A549 (cell line): ENCODE measurements at regions of chr1 and their contacts with region 1.

Region 1: DNA sequence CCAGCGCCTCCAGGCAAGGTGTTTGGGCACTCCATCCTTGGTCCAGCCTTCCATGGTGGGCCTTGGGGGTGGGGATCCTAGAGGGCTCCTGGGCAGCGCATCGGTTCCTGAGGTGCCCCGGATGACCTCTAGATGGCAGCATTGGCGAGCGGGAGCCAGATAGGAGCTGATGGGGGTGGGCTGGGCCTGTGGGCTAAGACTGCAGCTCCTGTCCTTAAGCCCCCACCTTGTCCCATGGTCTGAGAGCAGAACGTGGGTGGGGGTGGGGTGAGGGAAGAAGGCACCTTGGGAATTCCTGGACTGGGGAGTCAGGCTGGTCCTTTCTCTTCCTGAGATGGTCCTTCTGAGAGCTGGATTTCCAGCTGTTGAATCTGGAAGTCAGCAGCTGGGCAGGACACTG is 93.4 kb upstream of the CSF3R start:
- DNase-seq: peak; percentile 29 to 85
- ATAC-seq: peak; percentile 89 to 97
- H3K4me3 ChIP-seq: no peak overlapping the region
- H3K27ac ChIP-seq: no peak overlapping the region
- H3K4me1 ChIP-seq: no peaks in the 10 kb centered on the region
- CTCF ChIP-seq: peak; percentile 69
- EP300 ChIP-seq: no peak
- POLR2A ChIP-seq: no peak
- RAD21 ChIP-seq: peak; percentile 76 to 84

Region 2: GRCh38 chr1:36482710-36483393 is 93.3 kb before region 1 on chr1 and contains the start of gene CSF3R:
- CTCF ChIA-PET with region 1: no interaction called
- POLR2A ChIA-PET with region 1: no interaction called
- DNase-seq: no peak
- ATAC-seq: no peak
- H3K4me3 ChIP-seq: no peak within 1 kb of the TSS
- H3K27ac ChIP-seq: peak within 1 kb of the TSS in 1 of 2 experiments; percentile 49; a peak in 2 of 6 replicates
- H3K4me1 ChIP-seq: peaks cover 20% of the 10 kb centered on the region
- CTCF ChIP-seq: no peak
- EP300 ChIP-seq: no peak
- POLR2A ChIP-seq: no peak
- RAD21 ChIP-seq: no peak
- polyA plus RNA-seq, gene CSF3R: not detected in 2 replicates

Region 3: DNA sequence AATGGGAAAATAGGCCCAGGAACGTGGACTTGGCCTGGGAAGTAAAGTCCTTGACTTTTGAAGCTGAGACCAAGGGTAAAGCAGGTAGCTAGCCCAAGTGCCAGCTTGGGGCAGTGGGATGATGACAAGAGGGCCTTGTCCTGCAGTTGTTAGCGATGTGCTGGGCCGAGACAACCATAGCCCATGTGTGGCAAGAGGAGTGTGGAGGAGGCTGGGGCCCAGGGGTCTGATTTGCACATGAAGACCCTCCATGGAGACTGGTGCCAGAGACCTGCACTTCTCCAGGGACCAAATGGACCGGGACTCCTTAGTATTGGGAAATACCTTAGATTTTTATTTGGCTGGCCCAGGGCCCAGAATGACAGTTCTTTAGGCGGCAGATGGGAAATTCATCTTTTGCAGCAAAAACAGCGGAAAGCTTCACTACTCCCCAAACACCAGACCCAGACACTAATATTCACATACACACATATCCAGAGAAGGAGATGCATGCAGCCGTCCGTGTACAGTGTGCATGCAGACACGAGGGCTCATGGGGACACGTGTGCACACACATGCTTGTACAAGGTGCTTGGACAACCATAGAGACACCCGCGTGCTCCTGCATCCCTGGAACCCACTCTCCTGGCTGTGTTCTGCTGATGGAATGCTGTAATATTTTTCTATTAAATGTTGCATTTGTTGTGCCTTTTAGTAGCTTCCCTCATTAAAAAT is 15.3 kb before region 1 on chr1:
- CTCF ChIA-PET with region 1: interaction called, 26 read pairs
- POLR2A ChIA-PET with region 1: no interaction called
- DNase-seq: no peak
- ATAC-seq: no peak
- H3K4me3 ChIP-seq: no peak overlapping the region
- H3K27ac ChIP-seq: no peak overlapping the region
- H3K4me1 ChIP-seq: no peaks in the 10 kb centered on the region
- CTCF ChIP-seq: no peak
- EP300 ChIP-seq: no peak
- POLR2A ChIP-seq: no peak
- RAD21 ChIP-seq: no peak

Region 4: DNA sequence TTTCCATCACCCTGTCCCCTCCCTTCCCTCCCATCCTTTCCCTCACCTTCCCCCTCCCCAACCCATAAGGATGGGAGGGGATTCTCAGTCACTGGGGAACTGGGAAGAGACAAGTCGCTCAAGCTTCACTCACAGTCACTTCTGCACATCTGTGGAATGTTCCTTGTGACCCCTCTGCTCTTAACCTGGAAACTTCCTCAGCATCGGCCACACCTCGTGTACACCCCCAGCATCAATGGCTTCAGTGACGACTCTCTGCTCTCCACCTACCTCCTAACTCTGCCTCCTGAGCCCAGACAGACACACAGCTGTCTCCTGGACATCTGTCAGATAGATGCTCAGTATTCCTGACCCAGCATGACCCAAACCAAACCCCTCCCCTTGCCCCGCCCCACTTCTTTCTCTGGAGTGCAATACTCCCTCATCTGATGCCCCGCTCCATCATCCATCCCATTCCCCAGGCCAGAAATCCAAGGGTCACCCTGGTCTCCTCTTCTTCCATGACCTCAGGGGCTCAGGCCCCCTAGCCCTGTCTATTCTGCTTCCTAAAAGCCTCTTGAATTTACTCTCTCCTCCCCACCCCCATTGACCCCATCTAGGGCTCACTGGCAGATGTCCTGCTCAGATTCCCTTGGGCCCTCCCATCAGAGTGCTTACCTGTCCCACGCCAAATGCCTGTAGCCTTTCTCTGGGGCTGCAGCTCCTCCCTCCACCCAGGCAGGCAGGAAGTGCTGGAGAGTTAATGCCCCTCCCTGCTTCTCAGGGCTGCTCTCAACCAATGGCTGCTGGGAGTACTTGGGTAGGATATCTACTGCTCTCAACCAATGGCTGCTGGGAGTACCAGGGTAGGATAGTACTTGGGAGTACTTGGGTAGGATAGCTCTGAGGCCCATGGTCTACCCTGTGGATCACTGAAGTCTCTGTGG is 10.3 kb before region 1 on chr1:
- CTCF ChIA-PET with region 1: interaction called, 26 read pairs
- POLR2A ChIA-PET with region 1: no interaction called
- DNase-seq: no peak
- ATAC-seq: no peak
- H3K4me3 ChIP-seq: no peak overlapping the region
- H3K27ac ChIP-seq: no peak overlapping the region
- H3K4me1 ChIP-seq: no peaks in the 10 kb centered on the region
- CTCF ChIP-seq: no peak
- EP300 ChIP-seq: no peak
- POLR2A ChIP-seq: no peak
- RAD21 ChIP-seq: no peak

Region 5: GRCh38 chr1:36650200-36651065 is 74.3 kb after region 1 on chr1:
- CTCF ChIA-PET with region 1: interaction called, 11 read pairs
- POLR2A ChIA-PET with region 1: no interaction called
- DNase-seq: peak; percentile 46 to 55
- ATAC-seq: peak; percentile 62 to 92
- H3K4me3 ChIP-seq: no peak overlapping the region
- H3K27ac ChIP-seq: no peak overlapping the region
- H3K4me1 ChIP-seq: no peaks in the 10 kb centered on the region
- CTCF ChIP-seq: peak; percentile 58
- EP300 ChIP-seq: no peak
- POLR2A ChIP-seq: no peak
- RAD21 ChIP-seq: peak in 1 of 2 experiments; percentile 47; a peak in 4 of 5 replicates

Region 6: GRCh38 chr1:37038227-37039076 is 462.3 kb after region 1 on chr1:
- CTCF ChIA-PET with region 1: interaction called, 10 read pairs
- POLR2A ChIA-PET with region 1: no interaction called
- DNase-seq: peak; percentile 7 to 48
- ATAC-seq: peak; percentile 68 to 86
- H3K4me3 ChIP-seq: no peak overlapping the region
- H3K27ac ChIP-seq: no peak overlapping the region
- H3K4me1 ChIP-seq: no peaks in the 10 kb centered on the region
- CTCF ChIP-seq: no peak
- EP300 ChIP-seq: no peak
- POLR2A ChIP-seq: no peak
- RAD21 ChIP-seq: peak; percentile 44 to 63; a peak in 4 of 5 replicates

Region 7: DNA sequence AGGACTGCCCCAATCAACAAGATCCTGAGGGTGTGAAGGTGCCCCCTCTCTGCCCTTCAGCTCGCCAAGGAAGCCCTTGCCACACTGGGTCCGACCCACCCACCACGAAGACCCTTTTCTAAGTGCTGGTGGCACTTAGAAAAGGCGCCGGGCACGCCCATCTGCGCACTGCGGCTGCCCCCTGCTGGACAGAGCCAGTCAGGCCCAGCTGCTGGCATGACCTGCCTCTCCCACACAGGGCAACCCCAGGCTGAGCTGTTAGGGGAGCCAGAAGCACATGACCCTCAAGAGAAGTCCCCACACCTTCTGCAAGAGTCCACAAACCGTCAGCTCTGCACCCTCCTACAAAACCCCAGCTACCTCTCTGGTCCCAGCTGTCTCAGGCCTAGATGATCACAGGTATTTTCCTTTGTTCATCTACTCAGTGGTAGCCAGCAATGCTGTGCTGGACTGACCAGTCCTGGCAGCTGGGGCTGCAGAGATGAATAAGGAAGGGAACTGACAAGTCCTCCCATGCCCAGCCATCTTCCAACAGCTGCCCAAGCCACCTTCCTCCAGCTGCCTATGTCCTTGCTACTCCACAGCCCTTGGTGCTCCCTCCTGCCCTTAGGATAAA is 858.3 kb after region 1 on chr1:
- CTCF ChIA-PET with region 1: interaction called, 60 read pairs
- POLR2A ChIA-PET with region 1: no interaction called
- DNase-seq: peak; percentile 50 to 77
- ATAC-seq: peak; percentile 77 to 95
- H3K4me3 ChIP-seq: no peak overlapping the region
- H3K27ac ChIP-seq: no peak overlapping the region; a peak in 1 of 6 replicates
- H3K4me1 ChIP-seq: no peaks in the 10 kb centered on the region
- CTCF ChIP-seq: peak; percentile 64
- EP300 ChIP-seq: no peak
- POLR2A ChIP-seq: no peak
- RAD21 ChIP-seq: peak; percentile 79 to 84